OCI-LY7 (cell line): ENCODE measurements at regions of chr13 and their contacts with region 1.

Region 1: DNA sequence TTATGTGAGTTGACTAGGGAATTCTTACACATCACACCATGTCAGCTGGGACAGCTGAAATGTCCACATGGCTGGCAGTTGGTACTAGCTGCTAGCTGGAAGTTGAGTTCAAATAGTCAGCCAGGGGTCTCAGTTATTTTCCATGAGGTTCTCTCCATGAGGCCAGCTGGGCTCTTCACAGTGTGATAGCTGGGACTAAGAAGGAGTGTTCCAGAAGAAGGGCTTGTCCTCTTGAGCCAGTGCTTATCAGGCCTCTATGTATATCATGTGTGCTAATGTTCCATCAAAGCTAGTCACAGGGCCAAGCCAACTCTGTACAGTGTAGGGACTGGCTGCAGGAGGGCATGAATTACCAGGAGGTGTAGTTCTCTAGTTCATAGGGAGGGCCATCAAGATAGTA is 11.8 kb downstream of the USPL1 start:
- DNase-seq: no peak
- H3K4me3 ChIP-seq: no peak overlapping the region
- H3K27ac ChIP-seq: no peak overlapping the region
- H3K4me1 ChIP-seq: peaks cover 28% of the 10 kb centered on the region
- CTCF ChIP-seq: no peak

Region 2: DNA sequence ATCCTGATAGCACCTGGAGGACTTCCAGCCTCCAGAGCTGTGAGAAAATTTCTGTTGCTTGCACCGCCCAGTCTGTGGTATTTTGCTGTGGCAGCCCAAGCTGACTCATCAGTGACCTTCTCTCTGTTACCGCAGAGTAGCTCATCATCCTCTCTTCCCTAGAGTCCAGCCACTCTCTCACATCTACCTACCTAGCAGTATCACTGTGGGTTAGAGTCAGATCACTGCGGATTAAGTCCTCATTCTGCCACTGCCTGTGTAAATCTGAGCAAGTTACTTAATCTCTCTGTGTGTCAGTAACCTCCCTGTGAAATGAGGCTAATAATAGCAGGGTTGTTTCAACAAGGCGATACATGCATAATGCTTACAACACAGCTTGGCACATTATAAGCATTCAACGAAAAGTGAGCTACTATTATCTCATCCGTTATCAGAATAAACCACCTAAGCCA is 52.1 kb before region 1 on chr13:
- CTCF ChIA-PET with region 1: no interaction called
- POLR2A ChIA-PET with region 1: no interaction called
- intact Hi-C with region 1: no loop called
- DNase-seq: no peak
- H3K4me3 ChIP-seq: no peak overlapping the region
- H3K27ac ChIP-seq: no peak overlapping the region
- H3K4me1 ChIP-seq: peaks cover 6% of the 10 kb centered on the region
- CTCF ChIP-seq: no peak

Region 3: DNA sequence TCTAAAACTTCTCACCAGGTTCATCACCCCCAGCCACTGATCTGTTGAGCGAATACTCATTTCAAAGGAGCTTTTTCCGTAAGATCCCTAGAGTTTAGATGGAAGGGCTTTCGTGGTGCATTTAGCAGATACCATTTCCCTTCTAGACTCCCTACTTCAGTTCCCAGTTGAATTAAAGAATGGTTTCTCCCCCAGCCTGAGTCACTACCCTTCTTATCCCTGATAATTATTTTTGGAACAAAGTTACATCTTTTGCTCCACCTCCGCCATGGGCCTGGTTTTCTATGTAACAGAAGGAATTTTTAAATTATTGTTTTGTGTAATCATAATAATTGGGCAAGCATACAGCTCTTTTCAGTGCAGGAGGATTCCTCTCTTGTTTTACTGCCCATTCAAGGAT is 10.1 kb after region 1 on chr13:
- CTCF ChIA-PET with region 1: no interaction called
- POLR2A ChIA-PET with region 1: interaction called, 6 read pairs
- intact Hi-C with region 1: loop called (anchors 2 kb)
- DNase-seq: no peak
- H3K4me3 ChIP-seq: no peak overlapping the region
- H3K27ac ChIP-seq: no peak overlapping the region
- H3K4me1 ChIP-seq: peaks cover 9% of the 10 kb centered on the region
- CTCF ChIP-seq: no peak

Region 4: DNA sequence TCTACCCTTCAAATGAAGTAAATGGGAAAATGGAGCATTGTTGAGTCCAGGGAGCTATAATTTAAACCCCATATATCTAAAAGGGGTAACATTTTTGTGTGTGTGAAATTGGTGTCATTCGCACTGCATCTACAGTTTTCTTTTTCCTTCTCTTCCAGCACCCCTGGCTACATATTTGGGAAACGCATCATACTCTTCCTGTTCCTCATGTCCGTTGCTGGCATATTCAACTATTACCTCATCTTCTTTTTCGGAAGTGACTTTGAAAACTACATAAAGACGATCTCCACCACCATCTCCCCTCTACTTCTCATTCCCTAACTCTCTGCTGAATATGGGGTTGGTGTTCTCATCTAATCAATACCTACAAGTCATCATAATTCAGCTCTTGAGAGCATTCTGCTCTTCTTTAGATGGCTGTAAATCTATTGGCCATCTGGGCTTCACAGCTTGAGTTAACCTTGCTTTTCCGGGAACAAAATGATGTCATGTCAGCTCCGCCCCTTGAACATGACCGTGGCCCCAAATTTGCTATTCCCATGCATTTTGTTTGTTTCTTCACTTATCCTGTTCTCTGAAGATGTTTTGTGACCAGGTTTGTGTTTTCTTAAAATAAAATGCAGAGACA is 134.4 kb after region 1 on chr13:
- CTCF ChIA-PET with region 1: no interaction called
- POLR2A ChIA-PET with region 1: no interaction called
- intact Hi-C with region 1: no loop called
- DNase-seq: no peak
- H3K4me3 ChIP-seq: no peak overlapping the region
- H3K27ac ChIP-seq: no peak overlapping the region
- H3K4me1 ChIP-seq: peaks cover 22% of the 10 kb centered on the region
- CTCF ChIP-seq: no peak